B cell (primary cell): ENCODE measurements at regions of chr10 and their contacts with region 1.

Region 1: DNA sequence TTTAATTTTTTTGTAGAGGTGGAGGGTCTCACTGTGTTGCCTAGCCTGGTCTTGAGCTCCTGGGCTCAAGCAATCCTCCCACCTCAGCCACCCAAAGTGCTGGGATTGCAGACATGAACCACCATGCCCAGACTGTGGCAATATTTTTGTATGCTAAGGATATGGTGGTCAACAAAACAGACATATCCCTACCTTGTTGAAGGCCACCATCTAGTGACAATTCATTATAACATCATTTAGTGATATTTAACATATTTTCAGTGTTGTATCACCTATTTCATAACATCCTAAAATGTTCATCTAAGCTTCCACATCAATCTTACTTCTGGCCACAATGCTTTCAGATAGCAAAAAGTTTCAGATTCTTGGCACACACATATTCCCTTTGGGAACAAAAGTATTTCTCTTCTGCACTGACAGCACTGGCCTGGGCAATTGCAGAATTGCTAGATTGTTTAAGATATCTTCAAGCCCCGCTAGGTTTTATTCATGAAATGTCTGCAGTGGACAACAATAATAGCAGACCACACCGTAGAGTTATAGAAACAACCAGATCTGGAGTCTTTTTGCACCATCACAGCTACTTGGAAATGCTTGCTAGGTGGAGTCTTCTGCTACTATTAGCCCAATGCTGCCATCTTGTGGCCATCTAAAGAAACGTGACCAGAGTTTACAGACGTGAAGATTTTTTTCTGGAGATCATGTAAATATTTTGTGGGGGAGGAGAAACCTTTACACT is 58.4 kb downstream of the DNAJC12 start:
- DNase-seq: peak; percentile 90
- ATAC-seq: peak; percentile 80
- H3K4me3 ChIP-seq: no peak overlapping the region
- H3K4me3 Mint-ChIP-seq: no peak overlapping the region
- H3K27ac ChIP-seq: no peak overlapping the region
- H3K27ac Mint-ChIP-seq: no peak overlapping the region
- H3K4me1 ChIP-seq: peaks cover 27 to 38% of the 10 kb centered on the region in 2 donors
- H3K4me1 Mint-ChIP-seq: peaks cover 31% of the 10 kb centered on the region
- H3K27me3 ChIP-seq: no peaks in the 10 kb centered on the region
- H3K27me3 Mint-ChIP-seq: no peaks in the 10 kb centered on the region
- CTCF ChIP-seq: peak; percentile 90

Region 2: DNA sequence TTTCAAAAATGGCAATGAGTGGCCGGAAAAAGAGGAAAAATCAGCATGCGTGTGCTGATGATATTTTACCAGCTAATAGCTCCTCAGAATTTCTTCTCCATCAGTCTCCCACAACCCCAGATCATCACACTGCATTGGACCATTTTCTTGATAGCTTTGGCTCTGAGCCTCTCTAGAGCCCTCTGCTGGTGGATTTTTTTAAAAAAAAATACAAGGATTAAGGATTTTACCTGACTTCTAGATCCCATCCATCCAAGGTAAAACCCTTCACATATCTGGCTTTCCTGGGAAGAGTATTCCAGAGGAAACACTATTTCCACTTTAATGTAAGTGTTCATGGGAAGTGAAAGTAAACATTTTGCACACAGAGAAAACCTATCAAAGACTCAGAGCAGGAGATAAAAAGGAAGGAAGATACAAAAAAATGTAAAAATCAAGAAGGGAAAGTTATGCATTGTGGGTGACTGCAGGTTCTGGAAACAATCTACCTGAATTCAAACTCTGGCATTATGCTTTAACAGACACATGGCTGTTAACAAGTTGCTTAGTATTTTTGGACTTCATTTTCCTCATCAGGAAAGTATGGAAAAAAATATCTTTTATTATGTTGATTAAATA is 472.9 kb before region 1 on chr10:
- CTCF ChIA-PET with region 1: no interaction called
- POLR2A ChIA-PET with region 1: no interaction called
- intact Hi-C with region 1: loop called (anchors 5 kb)
- DNase-seq: no peak
- ATAC-seq: no peak
- H3K4me3 ChIP-seq: no peak overlapping the region
- H3K4me3 Mint-ChIP-seq: no peak overlapping the region
- H3K27ac ChIP-seq: no peak overlapping the region
- H3K27ac Mint-ChIP-seq: no peak overlapping the region
- H3K4me1 ChIP-seq: no peaks in the 10 kb centered on the region
- H3K4me1 Mint-ChIP-seq: no peaks in the 10 kb centered on the region
- H3K27me3 ChIP-seq: no peaks in the 10 kb centered on the region
- H3K27me3 Mint-ChIP-seq: no peaks in the 10 kb centered on the region
- CTCF ChIP-seq: peak; percentile 24

Region 3: GRCh38 chr10:67697724-67698131 is 81.9 kb before region 1 on chr10:
- CTCF ChIA-PET with region 1: interaction called, 512 read pairs
- POLR2A ChIA-PET with region 1: interaction called, 3 read pairs
- intact Hi-C with region 1: loop called (anchors 1 kb)
- DNase-seq: peak; percentile 67
- ATAC-seq: peak; percentile 71
- H3K4me3 ChIP-seq: no peak overlapping the region
- H3K4me3 Mint-ChIP-seq: no peak overlapping the region
- H3K27ac ChIP-seq: no peak overlapping the region
- H3K27ac Mint-ChIP-seq: no peak overlapping the region
- H3K4me1 ChIP-seq: no peaks in the 10 kb centered on the region
- H3K4me1 Mint-ChIP-seq: no peaks in the 10 kb centered on the region
- H3K27me3 ChIP-seq: peaks cover 0 to 9% (median 0%) of the 10 kb centered on the region in 4 experiments
- H3K27me3 Mint-ChIP-seq: peaks cover 46% of the 10 kb centered on the region
- CTCF ChIP-seq: peak; percentile 82

Region 4: GRCh38 chr10:67764012-67764822 is 15.4 kb before region 1 on chr10:
- CTCF ChIA-PET with region 1: interaction called, 171 read pairs
- POLR2A ChIA-PET with region 1: interaction called, 6 read pairs
- intact Hi-C with region 1: loop called (anchors 2 kb)
- DNase-seq: peak; percentile 99
- ATAC-seq: peak; percentile 77
- H3K4me3 ChIP-seq: peak overlapping the region; percentile 74 to 93 (median 92)
- H3K4me3 Mint-ChIP-seq: peak overlapping the region; percentile 91
- H3K27ac ChIP-seq: peak overlapping the region; percentile 84 to 86
- H3K27ac Mint-ChIP-seq: peak overlapping the region; percentile 100
- H3K4me1 ChIP-seq: peaks cover 9 to 20% of the 10 kb centered on the region in 2 donors
- H3K4me1 Mint-ChIP-seq: peaks cover 28% of the 10 kb centered on the region
- H3K27me3 ChIP-seq: no peaks in the 10 kb centered on the region
- H3K27me3 Mint-ChIP-seq: no peaks in the 10 kb centered on the region
- CTCF ChIP-seq: no peak

Region 5: GRCh38 chr10:67803588-67804394 is 24.2 kb after region 1 on chr10:
- CTCF ChIA-PET with region 1: no interaction called
- POLR2A ChIA-PET with region 1: no interaction called
- intact Hi-C with region 1: no loop called
- DNase-seq: no peak
- ATAC-seq: no peak
- H3K4me3 ChIP-seq: no peak overlapping the region
- H3K4me3 Mint-ChIP-seq: no peak overlapping the region
- H3K27ac ChIP-seq: no peak overlapping the region
- H3K27ac Mint-ChIP-seq: no peak overlapping the region
- H3K4me1 ChIP-seq: no peaks in the 10 kb centered on the region
- H3K4me1 Mint-ChIP-seq: no peaks in the 10 kb centered on the region
- H3K27me3 ChIP-seq: no peaks in the 10 kb centered on the region
- H3K27me3 Mint-ChIP-seq: peaks cover 5% of the 10 kb centered on the region
- CTCF ChIP-seq: no peak

Region 6: DNA sequence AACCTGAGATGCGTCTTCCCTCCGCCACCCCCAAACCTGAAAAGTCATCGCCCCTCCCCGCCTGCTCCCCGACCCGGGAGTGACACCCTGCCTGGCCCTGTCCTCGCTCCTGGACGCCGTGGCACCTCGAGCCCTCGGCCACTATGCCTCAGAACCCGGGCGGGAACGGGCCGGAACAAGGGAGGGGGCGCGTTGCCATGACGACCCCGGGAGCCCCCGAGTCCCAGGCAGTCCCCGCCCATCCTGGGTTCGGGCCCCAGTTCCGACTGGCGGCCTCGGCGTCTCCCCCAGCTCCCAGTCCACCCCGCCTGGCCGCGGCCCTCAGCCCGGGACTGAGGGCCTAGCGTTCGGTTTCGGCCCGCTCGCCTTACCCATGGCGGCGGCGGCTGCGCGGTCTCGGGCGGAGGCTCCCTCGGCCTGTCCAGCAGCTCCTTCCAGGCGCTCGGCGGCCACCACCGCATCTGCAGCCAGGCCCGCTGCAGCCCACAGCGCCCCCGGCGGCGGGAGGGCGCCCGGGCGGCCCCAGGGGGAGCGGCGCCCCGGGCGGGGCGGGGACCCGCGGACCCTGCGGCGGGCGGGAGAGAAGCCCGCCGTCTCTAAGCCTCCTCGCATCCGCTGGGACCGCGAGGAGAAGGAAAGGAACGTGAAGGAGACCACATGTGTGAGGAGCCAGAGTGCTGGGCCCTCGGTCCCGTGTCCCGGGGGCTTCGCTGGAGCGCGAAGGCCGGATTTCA is 627.3 kb after region 1 on chr10 and contains the start of gene RUFY2:
- CTCF ChIA-PET with region 1: no interaction called
- POLR2A ChIA-PET with region 1: no interaction called
- intact Hi-C with region 1: loop called (anchors 10 kb)
- DNase-seq: peak; percentile 91
- ATAC-seq: peak; percentile 93
- H3K4me3 ChIP-seq: peak within 1 kb of the TSS; percentile 79 to 94 (median 91)
- H3K4me3 Mint-ChIP-seq: peak within 1 kb of the TSS; percentile 92
- H3K27ac ChIP-seq: peak within 1 kb of the TSS; percentile 51 to 83
- H3K27ac Mint-ChIP-seq: peak within 1 kb of the TSS; percentile 89
- H3K4me1 ChIP-seq: peaks cover 6 to 9% of the 10 kb centered on the region in 2 donors
- H3K4me1 Mint-ChIP-seq: peaks cover 22% of the 10 kb centered on the region
- H3K27me3 ChIP-seq: no peaks in the 10 kb centered on the region
- H3K27me3 Mint-ChIP-seq: no peaks in the 10 kb centered on the region
- CTCF ChIP-seq: peak; percentile 73
- total RNA-seq, gene RUFY2: 38.7 and 41.6 TPM in 2 replicates